AG04450 (cell line): ENCODE measurements at regions of chr4 and their contacts with region 1.

Region 1: DNA sequence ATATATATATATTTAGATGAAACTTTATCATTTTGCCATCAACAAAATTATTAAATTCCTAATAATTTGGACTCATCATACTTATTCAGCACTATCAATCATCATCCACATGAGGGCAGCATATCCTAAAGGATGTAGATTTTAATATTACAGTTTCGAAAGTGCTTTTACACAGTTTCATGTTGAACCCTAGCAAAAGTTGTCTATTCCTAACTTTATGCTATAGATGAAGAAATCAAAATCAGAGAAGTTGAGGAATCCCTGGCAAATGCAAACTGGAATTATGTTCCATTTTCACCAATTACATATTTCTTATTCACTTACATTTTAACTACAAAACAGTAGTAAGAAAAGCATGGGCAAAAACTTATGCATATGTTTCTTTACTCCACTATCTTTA is 36.6 kb upstream of the UGT2A1 start:
- DNase-seq: peak; percentile 1
- H3K4me3 ChIP-seq: no peak overlapping the region
- H3K27ac ChIP-seq: no peak overlapping the region
- H3K27me3 ChIP-seq: no peaks in the 10 kb centered on the region
- CTCF ChIP-seq: peak; percentile 62

Region 2: GRCh38 chr4:69881173-69881773 is 191.7 kb after region 1 on chr4:
- CTCF ChIA-PET with region 1: interaction called, 29 read pairs
- POLR2A ChIA-PET with region 1: no interaction called
- DNase-seq: peak; percentile 8
- H3K4me3 ChIP-seq: no peak overlapping the region
- H3K27ac ChIP-seq: no peak overlapping the region
- H3K27me3 ChIP-seq: no peaks in the 10 kb centered on the region
- CTCF ChIP-seq: peak; percentile 86